Ovary (tissue), 10 donors: ENCODE measurements at regions of chr2 and their contacts with region 1.

Region 1: GRCh38 chr2:136378712-136379595 is 261.0 kb upstream of the CXCR4 start:
- DNase-seq: no peak
- H3K4me3 ChIP-seq: no peak overlapping the region
- H3K27ac ChIP-seq: no peak overlapping the region
- H3K4me1 ChIP-seq: peaks cover 4% of the 10 kb centered on the region
- H3K27me3 ChIP-seq: no peaks in the 10 kb centered on the region
- CTCF ChIP-seq: no peak
- EP300 ChIP-seq: no peak
- POLR2A ChIP-seq: no peak

Region 2: DNA sequence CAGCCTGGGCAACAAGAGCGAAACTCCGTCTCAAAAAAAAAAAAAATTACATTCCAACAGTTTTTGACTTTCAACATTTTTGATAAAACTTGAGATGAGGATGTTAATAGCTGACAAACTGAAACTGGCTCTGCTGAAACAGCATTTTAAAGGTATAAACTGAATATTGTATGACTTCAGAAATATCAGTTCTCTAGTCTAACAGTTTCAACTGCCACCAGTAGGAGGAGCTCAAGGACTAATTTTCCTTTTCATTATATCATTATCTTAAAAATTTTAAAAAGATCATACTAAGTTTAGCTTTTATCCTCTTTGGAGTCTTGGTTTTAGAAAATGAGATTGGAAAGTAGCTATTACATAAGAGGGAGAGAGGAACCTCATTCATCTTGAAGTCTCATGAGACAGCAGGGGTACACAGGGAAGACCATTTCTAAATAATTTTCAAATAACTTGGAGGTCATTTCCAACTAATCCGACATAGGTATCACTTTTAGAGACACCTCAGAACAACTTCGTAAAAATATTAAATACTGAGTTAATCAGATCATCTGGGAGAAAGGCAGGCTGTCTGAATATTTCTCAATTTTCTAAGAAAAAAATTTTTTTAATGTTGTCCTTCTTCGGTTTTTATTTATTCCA is 465.1 kb before region 1 on chr2:
- intact Hi-C with region 1: loop called in 1 of 4 experiments (anchors 10 kb)
- DNase-seq: no peak
- H3K4me3 ChIP-seq: no peak overlapping the region
- H3K27ac ChIP-seq: no peak overlapping the region
- H3K4me1 ChIP-seq: no peaks in the 10 kb centered on the region
- H3K27me3 ChIP-seq: no peaks in the 10 kb centered on the region
- CTCF ChIP-seq: peak; percentile 28 to 37 (median 28)
- EP300 ChIP-seq: no peak
- POLR2A ChIP-seq: no peak